ENCODE measurements at regions of chr11 and their contacts with region 1.

Region 1: DNA sequence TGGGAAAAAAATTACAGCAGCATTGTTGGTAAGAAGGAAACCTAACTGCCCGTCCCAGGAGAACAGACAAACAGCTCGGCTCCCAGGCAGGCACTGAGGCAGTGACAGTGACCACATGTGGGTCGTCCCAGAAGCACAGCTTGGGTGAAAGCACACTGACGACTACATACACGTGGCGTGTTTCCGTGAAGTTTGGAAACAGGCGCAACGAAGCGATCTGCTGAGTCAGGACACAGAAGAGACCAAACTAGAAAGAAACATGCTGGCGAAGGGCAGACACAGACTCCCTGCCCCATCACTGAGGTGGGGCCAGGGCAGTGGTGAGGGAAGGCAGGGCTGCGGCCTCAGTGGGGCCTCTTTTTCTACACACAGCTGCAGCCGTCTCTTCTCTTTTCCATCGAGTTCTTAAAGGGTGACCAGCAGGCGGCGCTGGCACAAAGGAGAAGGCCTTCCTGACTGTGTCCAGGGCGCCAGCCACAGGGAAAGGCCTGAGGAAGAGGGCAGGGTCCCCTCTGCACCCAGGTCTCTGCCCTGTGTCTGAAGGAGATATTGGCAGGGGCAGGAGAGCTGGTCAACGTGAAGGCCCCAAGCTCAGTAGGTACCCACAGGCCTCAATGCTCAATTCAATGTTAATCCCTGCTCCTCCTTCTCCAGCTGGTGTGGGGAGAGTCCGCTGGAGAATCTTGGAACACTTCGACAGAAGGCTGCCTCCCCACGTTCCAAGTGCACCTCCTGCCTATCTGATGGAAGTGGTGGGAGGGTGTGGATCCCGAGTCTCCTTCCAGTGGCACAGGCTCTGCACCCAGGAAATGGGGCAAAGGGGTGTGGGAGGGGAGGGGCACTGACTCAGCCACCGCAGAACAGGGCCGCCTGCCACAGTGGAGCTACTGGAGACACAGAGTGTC is 19.9 kb downstream of the CARS1 start:
- DNase-seq: peak; percentile 78 to 85
- H3K4me3 ChIP-seq: no peak overlapping the region
- H3K27ac ChIP-seq: no peak overlapping the region
- H3K4me1 ChIP-seq: peaks cover 11 to 13% of the 10 kb centered on the region in 2 donors
- H3K27me3 ChIP-seq: no peaks in the 10 kb centered on the region
- CTCF ChIP-seq: peak; percentile 43 to 85 (median 71)
- POLR2A ChIP-seq: no peak

Region 2: DNA sequence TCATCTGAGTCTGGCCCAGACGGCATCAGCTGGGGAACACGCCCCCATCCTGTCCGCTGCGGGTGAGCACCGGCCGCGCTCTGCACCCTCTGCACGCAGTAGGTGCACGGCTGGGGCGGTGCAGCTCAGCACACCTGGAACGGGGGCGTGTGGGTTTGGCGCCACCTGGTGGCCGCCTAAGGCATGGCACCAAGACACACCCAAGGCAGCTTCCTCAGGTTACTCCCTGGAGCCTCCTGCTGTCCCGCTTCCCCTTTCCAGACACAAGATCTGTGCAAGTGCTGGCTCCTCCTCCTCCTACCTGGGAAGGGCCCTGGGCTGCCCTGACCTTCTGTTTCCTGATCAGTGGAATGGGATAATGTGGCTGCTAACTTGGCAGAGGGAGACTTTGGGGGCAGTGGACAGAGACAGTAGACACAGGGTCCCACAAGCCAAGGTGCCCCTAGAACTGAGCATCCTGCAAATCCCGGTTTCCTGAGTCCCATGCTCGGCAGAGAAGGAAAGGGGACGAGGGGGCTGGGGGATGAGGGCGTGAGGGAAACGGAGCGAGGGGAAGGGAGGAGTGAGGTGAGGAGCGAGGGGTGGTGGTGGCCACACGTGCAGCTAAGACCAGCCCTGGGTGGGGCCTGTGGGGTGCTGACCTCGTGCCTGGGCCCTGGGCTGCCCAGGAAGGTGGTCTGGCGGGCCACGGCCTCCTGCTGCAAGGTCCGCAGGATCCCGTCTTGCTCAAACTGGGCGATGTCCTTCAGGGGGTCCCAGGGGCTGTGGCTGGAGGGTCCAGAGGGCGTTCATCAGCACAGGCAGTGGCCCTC is 54.7 kb after region 1 on chr11:
- intact Hi-C with region 1: loop called (anchors 2 kb)
- DNase-seq: peak; percentile 71 to 72
- H3K4me3 ChIP-seq: no peak overlapping the region
- H3K27ac ChIP-seq: no peak overlapping the region
- H3K4me1 ChIP-seq: peaks cover 0 to 13% of the 10 kb centered on the region in 2 donors
- H3K27me3 ChIP-seq: no peaks in the 10 kb centered on the region
- CTCF ChIP-seq: peak; percentile 96 to 100 (median 99)
- POLR2A ChIP-seq: no peak

Region 3: GRCh38 chr11:3217676-3218482 is 180.6 kb after region 1 on chr11:
- intact Hi-C with region 1: loop called (anchors 5 kb)
- DNase-seq: peak in 1 of 2 donors; percentile 0
- H3K4me3 ChIP-seq: no peak overlapping the region
- H3K27ac ChIP-seq: no peak overlapping the region
- H3K4me1 ChIP-seq: peaks cover 5 to 8% of the 10 kb centered on the region in 2 donors
- H3K27me3 ChIP-seq: no peaks in the 10 kb centered on the region
- CTCF ChIP-seq: no peak
- POLR2A ChIP-seq: no peak